ENCODE measurements at regions of chr2 and their contacts with region 1.

Region 1: GRCh38 chr2:196160101-196160500 is 11.3 kb downstream of the STK17B start:
- DNase-seq: peak; percentile 86 to 90 (median 87)
- H3K4me3 ChIP-seq: peak overlapping the region in 1 of 2 donors; percentile 1
- H3K4me3 Mint-ChIP-seq: peak overlapping the region; percentile 62 to 90 (median 78)
- H3K27ac ChIP-seq: peak overlapping the region; percentile 95
- H3K27ac Mint-ChIP-seq: peak overlapping the region; percentile 92 to 98 (median 96)
- H3K4me1 ChIP-seq: peaks cover 96% of the 10 kb centered on the region
- H3K4me1 Mint-ChIP-seq: peaks cover 38 to 93% (median 59%) of the 10 kb centered on the region in 4 donors
- H3K27me3 ChIP-seq: no peaks in the 10 kb centered on the region
- H3K27me3 Mint-ChIP-seq: no peaks in the 10 kb centered on the region

Region 2: DNA sequence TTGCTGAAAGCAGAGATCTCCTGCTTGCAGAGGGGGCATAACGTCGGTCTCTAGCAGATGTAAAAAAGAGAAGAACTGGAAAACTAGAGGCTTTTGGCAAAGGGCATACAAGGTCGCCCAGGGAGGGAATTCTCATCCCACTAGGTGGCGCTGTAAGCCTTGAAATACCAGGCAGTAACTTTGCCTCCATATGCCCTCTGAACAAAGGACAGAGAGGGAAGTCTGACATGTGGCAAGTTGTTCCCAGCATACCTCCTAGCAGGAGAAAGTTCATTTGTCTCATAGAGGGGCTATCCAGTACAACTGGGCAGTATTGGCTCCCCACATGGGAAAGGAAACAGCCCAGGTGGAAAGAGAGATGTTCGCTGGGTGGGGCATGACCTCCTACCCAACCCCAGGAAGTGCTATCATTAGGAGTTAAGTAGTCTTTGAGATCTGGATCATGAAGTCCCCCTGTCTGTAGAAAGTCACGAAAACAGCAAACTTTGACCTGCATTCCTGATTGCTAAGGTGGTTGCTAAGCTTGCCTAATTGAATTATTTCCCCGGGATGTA is 28.6 kb before region 1 on chr2:
- CTCF ChIA-PET with region 1: interaction called, 3 read pairs
- POLR2A ChIA-PET with region 1: interaction called, 22 read pairs
- intact Hi-C with region 1: no loop called
- DNase-seq: peak; percentile 50 to 64 (median 60)
- H3K4me3 ChIP-seq: no peak overlapping the region
- H3K4me3 Mint-ChIP-seq: peak overlapping the region in 6 of 8 donors; percentile 6 to 62 (median 34)
- H3K27ac ChIP-seq: peak overlapping the region; percentile 33
- H3K27ac Mint-ChIP-seq: peak overlapping the region in 6 of 7 donors; percentile 66 to 94 (median 89)
- H3K4me1 ChIP-seq: peaks cover 12% of the 10 kb centered on the region
- H3K4me1 Mint-ChIP-seq: peaks cover 3 to 18% (median 10%) of the 10 kb centered on the region in 4 donors
- H3K27me3 ChIP-seq: no peaks in the 10 kb centered on the region
- H3K27me3 Mint-ChIP-seq: no peaks in the 10 kb centered on the region

Region 3: DNA sequence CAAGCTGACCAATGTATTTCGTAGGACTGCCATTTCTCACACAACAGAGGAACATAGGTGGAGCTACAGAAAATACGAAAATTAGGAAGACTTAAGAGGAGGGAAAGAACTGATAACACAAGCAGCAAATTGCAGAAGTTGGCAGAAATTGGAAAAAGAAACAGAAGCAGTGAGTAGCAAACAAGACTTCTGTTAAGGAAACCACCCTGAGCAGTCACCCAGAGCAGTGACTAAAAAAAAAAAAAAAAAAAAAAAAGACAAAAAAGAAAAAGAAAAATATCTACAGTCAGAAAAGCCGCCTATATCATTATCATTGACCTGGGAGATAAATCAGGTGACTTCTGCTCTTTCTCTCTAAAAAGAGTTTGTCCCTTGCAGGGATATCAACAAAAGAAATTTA is 10.2 kb before region 1 on chr2:
- CTCF ChIA-PET with region 1: interaction called, 7 read pairs
- POLR2A ChIA-PET with region 1: interaction called, 74 read pairs
- intact Hi-C with region 1: loop called (anchors 1 kb)
- DNase-seq: no peak
- H3K4me3 ChIP-seq: no peak overlapping the region
- H3K4me3 Mint-ChIP-seq: peak overlapping the region in 7 of 8 donors; percentile 13 to 75 (median 38)
- H3K27ac ChIP-seq: peak overlapping the region; percentile 43
- H3K27ac Mint-ChIP-seq: peak overlapping the region; percentile 42 to 92 (median 85)
- H3K4me1 ChIP-seq: peaks cover 94% of the 10 kb centered on the region
- H3K4me1 Mint-ChIP-seq: peaks cover 59 to 99% (median 77%) of the 10 kb centered on the region in 4 donors
- H3K27me3 ChIP-seq: no peaks in the 10 kb centered on the region
- H3K27me3 Mint-ChIP-seq: no peaks in the 10 kb centered on the region

Region 4: GRCh38 chr2:196200557-196200956 is 40.5 kb after region 1 on chr2:
- CTCF ChIA-PET with region 1: interaction called, 6 read pairs
- POLR2A ChIA-PET with region 1: interaction called, 94 read pairs
- intact Hi-C with region 1: no loop called
- DNase-seq: peak; percentile 45 to 55 (median 50)
- H3K4me3 ChIP-seq: peak overlapping the region; percentile 43 to 57
- H3K4me3 Mint-ChIP-seq: peak overlapping the region; percentile 74 to 92 (median 80)
- H3K27ac ChIP-seq: peak overlapping the region; percentile 70
- H3K27ac Mint-ChIP-seq: peak overlapping the region; percentile 72 to 98 (median 95)
- H3K4me1 ChIP-seq: peaks cover 63% of the 10 kb centered on the region
- H3K4me1 Mint-ChIP-seq: peaks cover 37 to 58% (median 44%) of the 10 kb centered on the region in 4 donors
- H3K27me3 ChIP-seq: no peaks in the 10 kb centered on the region
- H3K27me3 Mint-ChIP-seq: no peaks in the 10 kb centered on the region

Region 5: DNA sequence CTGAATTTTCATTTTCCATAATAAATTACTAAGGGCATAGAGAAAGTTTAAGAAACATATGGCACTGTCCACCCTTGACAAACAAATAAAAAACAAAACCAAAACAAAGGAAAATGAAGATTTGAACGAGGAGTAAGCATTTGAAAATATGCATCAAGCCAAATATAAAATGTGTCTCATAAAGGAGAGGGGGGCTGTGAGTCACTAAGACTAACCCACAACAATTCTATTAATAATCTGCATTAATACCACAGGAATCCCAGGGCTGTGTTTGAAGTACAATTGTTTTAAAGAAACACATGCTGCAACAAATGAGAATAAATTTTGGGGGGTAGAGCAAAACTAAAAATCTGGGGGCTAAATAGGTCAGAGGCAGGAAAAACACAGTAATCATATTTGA is 65.1 kb after region 1 on chr2:
- CTCF ChIA-PET with region 1: interaction called, 35 read pairs
- POLR2A ChIA-PET with region 1: interaction called, 60 read pairs
- intact Hi-C with region 1: no loop called
- DNase-seq: no peak
- H3K4me3 ChIP-seq: no peak overlapping the region
- H3K4me3 Mint-ChIP-seq: peak overlapping the region in 3 of 8 donors; percentile 33 to 57 (median 41)
- H3K27ac ChIP-seq: no peak overlapping the region
- H3K27ac Mint-ChIP-seq: peak overlapping the region in 5 of 7 donors; percentile 1 to 68 (median 54)
- H3K4me1 ChIP-seq: peaks cover 79% of the 10 kb centered on the region
- H3K4me1 Mint-ChIP-seq: peaks cover 51 to 85% (median 69%) of the 10 kb centered on the region in 4 donors
- H3K27me3 ChIP-seq: no peaks in the 10 kb centered on the region
- H3K27me3 Mint-ChIP-seq: no peaks in the 10 kb centered on the region

Region 6: DNA sequence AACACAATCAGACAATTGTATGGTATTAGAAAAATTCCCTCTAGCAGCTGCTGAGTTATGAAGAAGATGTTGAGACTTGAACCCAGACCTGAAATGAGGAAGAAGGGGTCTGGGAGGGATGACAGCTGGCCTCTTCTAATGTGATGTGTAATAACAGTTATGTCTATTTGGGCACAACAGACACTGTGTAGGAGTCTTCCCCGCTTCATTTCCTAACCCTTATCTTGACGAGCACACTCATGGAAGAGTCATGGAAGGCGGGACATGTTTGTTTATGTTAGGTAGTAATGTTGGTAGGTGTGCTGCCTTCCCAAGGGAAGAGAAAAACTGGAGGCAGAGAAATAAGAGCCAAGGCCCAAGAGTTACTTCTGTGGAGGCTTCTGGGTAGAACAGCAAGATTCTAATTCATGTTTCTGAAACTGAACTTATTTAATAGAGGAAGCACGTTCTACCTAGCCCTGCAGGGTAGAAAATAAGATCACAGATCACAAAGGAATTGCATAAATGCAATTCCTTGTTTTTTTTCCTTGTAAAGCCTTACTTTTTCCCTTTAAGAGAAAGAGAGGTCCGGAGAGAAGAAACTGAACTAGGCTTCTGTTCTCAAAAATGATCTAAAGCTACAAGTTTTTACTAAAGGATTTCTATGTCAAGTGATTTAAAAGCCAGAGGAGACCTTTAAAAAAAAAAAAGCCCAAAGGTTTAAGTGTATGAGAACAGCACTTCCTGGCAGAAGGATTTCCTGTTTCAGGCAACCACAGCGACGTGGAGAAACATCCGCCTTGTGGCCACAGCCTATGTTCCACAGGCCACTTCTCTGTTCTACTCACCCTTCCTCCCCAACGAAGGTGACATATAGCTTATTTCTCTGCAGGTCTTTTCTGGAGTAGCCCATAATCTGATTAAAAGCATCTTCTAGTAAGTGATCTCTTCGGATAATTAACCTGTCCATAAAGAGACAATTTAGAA is 79.8 kb after region 1 on chr2:
- CTCF ChIA-PET with region 1: interaction called, 4 read pairs
- POLR2A ChIA-PET with region 1: interaction called, 62 read pairs
- intact Hi-C with region 1: loop called (anchors 1 kb)
- DNase-seq: peak; percentile 84 to 90 (median 87)
- H3K4me3 ChIP-seq: peak overlapping the region in 1 of 2 donors; percentile 44
- H3K4me3 Mint-ChIP-seq: peak overlapping the region; percentile 65 to 82 (median 78)
- H3K27ac ChIP-seq: peak overlapping the region; percentile 56
- H3K27ac Mint-ChIP-seq: peak overlapping the region; percentile 95 to 98 (median 96)
- H3K4me1 ChIP-seq: peaks cover 76% of the 10 kb centered on the region
- H3K4me1 Mint-ChIP-seq: peaks cover 62 to 86% (median 70%) of the 10 kb centered on the region in 4 donors
- H3K27me3 ChIP-seq: no peaks in the 10 kb centered on the region
- H3K27me3 Mint-ChIP-seq: no peaks in the 10 kb centered on the region

Region 7: DNA sequence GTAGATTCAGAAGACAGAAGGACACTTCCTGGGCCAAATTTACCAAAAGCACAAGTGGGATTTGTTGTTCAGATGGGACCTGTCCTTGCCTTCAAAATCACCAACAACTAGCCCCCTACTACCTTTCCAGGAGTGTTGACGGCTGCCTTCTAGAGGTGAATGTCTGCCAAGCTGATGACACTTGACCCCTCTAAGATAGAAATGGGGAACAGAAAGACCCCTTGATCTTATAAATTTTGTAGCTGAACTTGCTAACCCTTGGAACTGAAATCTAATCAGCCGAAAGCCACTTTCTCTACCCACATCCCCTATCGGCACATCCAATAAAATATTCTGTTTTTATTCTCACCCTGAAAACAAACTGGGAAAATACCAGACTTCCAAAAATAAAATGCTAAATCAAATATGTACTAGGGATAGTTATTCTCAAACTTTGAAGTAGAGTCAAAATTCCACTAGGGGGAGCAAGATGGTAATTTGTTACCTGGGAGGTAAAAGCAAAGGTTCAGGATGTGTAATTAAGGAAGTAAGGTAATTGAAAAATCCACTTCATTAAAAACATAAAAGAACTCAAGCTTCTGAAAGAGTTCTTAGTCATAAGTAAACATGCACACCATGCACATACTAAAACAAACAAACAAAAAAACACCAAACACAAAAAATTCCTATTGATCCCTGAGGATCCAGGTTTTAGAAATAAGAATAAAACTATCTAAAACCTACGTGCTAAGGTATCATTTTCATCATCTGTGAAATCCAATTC is 1031.3 kb after region 1 on chr2:
- CTCF ChIA-PET with region 1: no interaction called
- POLR2A ChIA-PET with region 1: no interaction called
- intact Hi-C with region 1: loop called (anchors 10 kb)
- DNase-seq: peak in 4 of 5 donors; percentile 69 to 75 (median 74)
- H3K4me3 ChIP-seq: no peak overlapping the region
- H3K4me3 Mint-ChIP-seq: peak overlapping the region in 7 of 8 donors; percentile 27 to 73 (median 60)
- H3K27ac ChIP-seq: peak overlapping the region; percentile 77
- H3K27ac Mint-ChIP-seq: peak overlapping the region; percentile 64 to 93 (median 89)
- H3K4me1 ChIP-seq: peaks cover 90% of the 10 kb centered on the region
- H3K4me1 Mint-ChIP-seq: peaks cover 64 to 85% (median 73%) of the 10 kb centered on the region in 4 donors
- H3K27me3 ChIP-seq: no peaks in the 10 kb centered on the region
- H3K27me3 Mint-ChIP-seq: no peaks in the 10 kb centered on the region